Activated naive CD8-positive, alpha-beta T cell treated with anti-CD3 and anti-CD28 coated beads, Interleukin-2, amount 10 ng/mL, durations not matched to agents 7 days and 5 days (primary cell): ENCODE measurements at regions of chr15 and their contacts with region 1.

Region 1: DNA sequence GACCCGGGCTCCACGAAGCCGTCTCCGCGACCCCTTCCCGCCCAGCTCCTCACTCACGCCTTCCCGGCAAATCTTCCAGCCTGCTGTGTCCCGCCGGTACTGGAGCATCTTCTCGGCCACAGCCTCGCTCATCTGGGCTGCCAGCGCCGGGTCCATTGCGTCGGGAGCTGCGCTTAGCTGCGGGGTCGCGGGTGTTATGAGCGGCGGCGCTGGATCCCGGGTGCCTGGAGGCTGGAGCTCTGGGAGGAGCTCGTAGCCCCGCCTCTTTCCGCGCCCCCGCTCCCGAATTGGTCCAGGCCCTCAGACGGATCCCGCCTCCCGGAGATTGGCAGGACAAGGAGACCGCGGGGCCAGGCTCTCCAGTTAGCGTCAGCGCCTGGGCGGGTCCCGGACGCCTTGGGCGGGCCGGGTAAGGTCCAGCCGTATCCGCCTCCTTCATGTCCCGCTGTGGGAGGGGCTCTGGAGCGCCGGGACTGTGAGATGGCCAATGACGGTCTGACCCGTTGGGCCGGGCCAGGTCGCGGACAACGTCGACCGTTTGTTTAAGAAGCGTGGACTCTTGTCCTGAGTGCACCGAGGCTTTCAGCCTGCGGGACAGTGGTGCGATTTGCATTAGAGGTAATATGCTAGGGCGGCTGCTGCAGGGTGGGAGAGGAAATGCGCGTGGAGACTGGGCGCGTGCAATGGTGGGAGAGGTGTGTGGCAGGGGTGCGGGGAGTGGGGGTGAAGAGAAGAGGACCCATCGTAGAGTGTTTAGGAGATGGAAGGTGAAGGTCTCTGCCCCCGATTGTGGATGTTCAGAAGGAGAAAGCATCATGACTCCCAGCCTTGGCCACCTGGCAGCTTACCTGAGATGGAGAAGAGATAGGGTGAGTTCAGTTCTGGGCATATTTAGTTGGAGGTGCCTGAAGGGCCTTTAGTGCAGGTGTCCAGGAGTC is at the start of gene STARD5:
- DNase-seq: peak; percentile 96
- ATAC-seq: peak; percentile 100
- H3K4me3 Mint-ChIP-seq: peak within 1 kb of the TSS; percentile 96
- H3K27ac Mint-ChIP-seq: peak within 1 kb of the TSS; percentile 91
- H3K4me1 Mint-ChIP-seq: peaks cover 25% of the 10 kb centered on the region
- H3K27me3 Mint-ChIP-seq: no peaks in the 10 kb centered on the region
- total RNA-seq, gene STARD5: 5.4 to 7.2 TPM

Region 2: GRCh38 chr15:81312790-81313543 is 11.2 kb before region 1 on chr15:
- POLR2A ChIA-PET with region 1: interaction called, 26 read pairs
- DNase-seq: no peak
- ATAC-seq: no peak
- H3K4me3 Mint-ChIP-seq: no peak overlapping the region
- H3K27ac Mint-ChIP-seq: peak overlapping the region; percentile 54
- H3K4me1 Mint-ChIP-seq: peaks cover 41% of the 10 kb centered on the region
- H3K27me3 Mint-ChIP-seq: no peaks in the 10 kb centered on the region

Region 3: DNA sequence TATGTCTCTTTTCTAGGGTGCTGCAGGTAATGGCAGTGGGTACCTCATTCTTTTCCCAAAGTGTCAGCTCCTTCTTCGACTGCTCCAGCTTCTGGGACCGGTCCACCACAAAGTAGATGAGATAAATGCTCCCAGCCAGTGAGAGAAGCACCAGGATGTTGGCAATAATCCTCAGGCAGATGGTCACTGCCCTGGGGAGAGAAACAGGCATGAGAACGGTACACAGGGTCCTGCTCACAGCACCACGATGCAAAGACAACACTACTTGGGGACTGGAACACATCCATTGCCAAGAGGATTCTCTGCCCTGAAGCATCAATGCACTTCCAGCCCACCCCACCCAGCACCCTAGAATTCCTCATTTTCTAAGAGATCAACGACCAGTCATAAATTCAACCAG is 27.4 kb after region 1 on chr15:
- POLR2A ChIA-PET with region 1: no interaction called
- DNase-seq: no peak
- ATAC-seq: no peak
- H3K4me3 Mint-ChIP-seq: no peak overlapping the region
- H3K27ac Mint-ChIP-seq: no peak overlapping the region
- H3K4me1 Mint-ChIP-seq: peaks cover 1% of the 10 kb centered on the region
- H3K27me3 Mint-ChIP-seq: no peaks in the 10 kb centered on the region